MCF 10A (cell line): ENCODE measurements at regions of chr3 and their contacts with region 1.

Region 1: DNA sequence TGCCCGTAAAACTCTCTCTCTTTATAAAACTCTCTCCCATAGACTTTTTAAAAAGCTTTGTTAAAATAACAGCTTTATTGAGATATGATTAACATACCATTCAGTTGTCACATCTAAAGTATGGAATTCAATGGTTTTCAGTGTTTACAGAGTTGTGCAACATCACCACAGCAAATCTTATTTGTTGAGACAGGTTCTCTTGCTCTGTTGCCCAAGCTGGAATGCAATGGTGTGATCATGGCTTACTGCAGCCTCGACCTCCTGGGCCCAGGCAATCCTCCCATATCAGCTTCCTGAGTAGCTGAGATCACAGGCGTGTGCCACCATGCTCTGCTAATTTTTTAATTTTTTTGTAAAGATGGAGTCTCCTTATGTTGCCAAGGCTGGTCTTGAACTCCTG is 35.9 kb upstream of the TRAK1 start:
- DNase-seq: peak; percentile 76
- H3K4me3 Mint-ChIP-seq: no peak overlapping the region
- H3K27ac Mint-ChIP-seq: peak overlapping the region; percentile 89
- H3K4me1 Mint-ChIP-seq: peaks cover 34% of the 10 kb centered on the region
- H3K27me3 Mint-ChIP-seq: no peaks in the 10 kb centered on the region
- CTCF ChIP-seq: no peak

Region 2: DNA sequence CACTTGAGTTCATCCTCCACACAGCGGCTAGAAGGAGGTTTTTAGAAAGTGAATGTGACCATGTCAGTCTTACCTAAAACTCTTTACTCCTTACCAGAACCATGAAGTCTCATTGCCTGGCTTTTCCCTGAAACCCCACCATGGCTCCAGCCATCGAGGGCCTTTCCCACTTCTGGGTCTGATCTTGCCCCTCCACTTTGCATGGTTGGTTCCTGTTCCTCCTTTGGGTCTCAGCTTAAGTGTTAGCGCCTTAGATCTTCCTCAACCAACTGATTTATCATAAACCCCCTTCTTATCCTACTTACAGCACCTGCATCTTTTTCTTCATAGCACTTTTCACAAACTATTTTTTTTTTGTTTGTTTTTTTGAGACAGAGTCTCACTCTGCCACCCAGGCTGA is 47.5 kb before region 1 on chr3:
- CTCF ChIA-PET with region 1: no interaction called
- POLR2A ChIA-PET with region 1: no interaction called
- intact Hi-C with region 1: no loop called
- DNase-seq: no peak
- H3K4me3 Mint-ChIP-seq: no peak overlapping the region
- H3K27ac Mint-ChIP-seq: no peak overlapping the region
- H3K4me1 Mint-ChIP-seq: no peaks in the 10 kb centered on the region
- H3K27me3 Mint-ChIP-seq: no peaks in the 10 kb centered on the region
- CTCF ChIP-seq: no peak

Region 3: GRCh38 chr3:42080452-42080891 is 25.2 kb after region 1 on chr3:
- CTCF ChIA-PET with region 1: interaction called, 5 read pairs
- POLR2A ChIA-PET with region 1: interaction called, 56 read pairs
- intact Hi-C with region 1: no loop called
- DNase-seq: peak; percentile 84
- H3K4me3 Mint-ChIP-seq: peak overlapping the region; percentile 37
- H3K27ac Mint-ChIP-seq: peak overlapping the region; percentile 97
- H3K4me1 Mint-ChIP-seq: peaks cover 28% of the 10 kb centered on the region
- H3K27me3 Mint-ChIP-seq: no peaks in the 10 kb centered on the region
- CTCF ChIP-seq: no peak